Right cardiac atrium (tissue), 5 donors: ENCODE measurements at regions of chr14 and their contacts with region 1.

Region 1: GRCh38 chr14:25150934-25151790 is 101.2 kb upstream of the STXBP6 start:
- DNase-seq: no peak
- ATAC-seq: no peak
- H3K4me3 ChIP-seq: no peak overlapping the region
- H3K27ac ChIP-seq: no peak overlapping the region
- H3K4me1 ChIP-seq: no peaks in the 10 kb centered on the region
- H3K27me3 ChIP-seq: no peaks in the 10 kb centered on the region

Region 2: GRCh38 chr14:24705840-24706239 is 445.3 kb before region 1 on chr14:
- intact Hi-C with region 1: loop called in 1 of 4 experiments (anchors 10 kb)
- DNase-seq: no peak
- ATAC-seq: no peak
- H3K4me3 ChIP-seq: no peak overlapping the region
- H3K27ac ChIP-seq: no peak overlapping the region
- H3K4me1 ChIP-seq: no peaks in the 10 kb centered on the region
- H3K27me3 ChIP-seq: no peaks in the 10 kb centered on the region

Region 3: DNA sequence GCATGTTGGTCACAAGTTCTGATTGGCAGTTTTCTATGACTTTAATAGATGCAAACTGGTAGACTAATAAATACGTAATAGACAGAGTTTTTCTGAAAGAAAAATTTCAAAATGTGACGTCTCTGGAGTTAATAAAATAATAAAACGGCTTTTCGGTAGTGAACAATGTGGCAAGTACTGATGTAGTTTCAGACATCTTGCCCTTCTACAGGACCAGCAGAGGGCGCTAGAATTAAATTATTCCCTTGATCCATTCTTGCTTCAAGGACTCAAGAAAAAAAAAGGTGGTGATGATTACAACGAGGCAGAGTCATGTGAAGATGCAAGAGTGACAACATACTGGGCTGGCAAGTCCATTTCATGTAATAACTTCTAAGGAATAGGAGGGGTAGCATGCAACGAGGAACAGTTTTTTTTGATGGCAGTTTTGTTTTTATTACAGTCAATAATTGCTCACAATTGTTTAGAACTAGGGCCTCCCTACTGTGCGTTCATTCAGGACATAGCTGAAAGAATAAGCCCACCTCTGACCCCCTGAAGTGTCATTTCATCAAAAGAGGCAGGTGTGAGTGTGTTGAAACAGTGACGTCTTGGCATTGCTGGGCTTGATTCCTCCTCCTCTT is 416.2 kb before region 1 on chr14:
- intact Hi-C with region 1: loop called (anchors 5 kb)
- DNase-seq: peak in 1 of 3 donors; percentile 19
- ATAC-seq: peak; percentile 69 to 73
- H3K4me3 ChIP-seq: no peak overlapping the region
- H3K27ac ChIP-seq: no peak overlapping the region
- H3K4me1 ChIP-seq: no peaks in the 10 kb centered on the region
- H3K27me3 ChIP-seq: no peaks in the 10 kb centered on the region